Activated CD4-positive, alpha-beta T cell treated with anti-CD3 and anti-CD28 coated beads, Interleukin-2, amount 10 ng/mL, durations not matched to agents 7 days and 5 days (primary cell): ENCODE measurements at regions of chr1 and their contacts with region 1.

Region 1: GRCh38 chr1:150162862-150163706 is 13.4 kb downstream of the PLEKHO1 start:
- DNase-seq: no peak
- H3K4me3 Mint-ChIP-seq: no peak overlapping the region
- H3K27ac Mint-ChIP-seq: peak overlapping the region; percentile 6
- H3K4me1 Mint-ChIP-seq: peaks cover 69% of the 10 kb centered on the region
- H3K27me3 Mint-ChIP-seq: peaks cover 3% of the 10 kb centered on the region

Region 2: GRCh38 chr1:150072959-150073358 is 90.1 kb before region 1 on chr1:
- CTCF ChIA-PET with region 1: interaction called, 14 read pairs
- POLR2A ChIA-PET with region 1: interaction called, 4 read pairs
- DNase-seq: no peak
- H3K4me3 Mint-ChIP-seq: no peak overlapping the region
- H3K27ac Mint-ChIP-seq: no peak overlapping the region
- H3K4me1 Mint-ChIP-seq: peaks cover 41% of the 10 kb centered on the region
- H3K27me3 Mint-ChIP-seq: no peaks in the 10 kb centered on the region

Region 3: GRCh38 chr1:150141452-150141851 is 21.6 kb before region 1 on chr1:
- CTCF ChIA-PET with region 1: no interaction called
- POLR2A ChIA-PET with region 1: no interaction called
- DNase-seq: no peak
- H3K4me3 Mint-ChIP-seq: no peak overlapping the region
- H3K27ac Mint-ChIP-seq: no peak overlapping the region
- H3K4me1 Mint-ChIP-seq: peaks cover 12% of the 10 kb centered on the region
- H3K27me3 Mint-ChIP-seq: no peaks in the 10 kb centered on the region

Region 4: GRCh38 chr1:150259758-150260669 is 96.9 kb after region 1 on chr1:
- CTCF ChIA-PET with region 1: no interaction called
- POLR2A ChIA-PET with region 1: no interaction called
- DNase-seq: no peak
- H3K4me3 Mint-ChIP-seq: no peak overlapping the region
- H3K27ac Mint-ChIP-seq: no peak overlapping the region
- H3K4me1 Mint-ChIP-seq: peaks cover 13% of the 10 kb centered on the region
- H3K27me3 Mint-ChIP-seq: peaks cover 42% of the 10 kb centered on the region